PC-9 (cell line): ENCODE measurements at regions of chr12 and their contacts with region 1.

Region 1: DNA sequence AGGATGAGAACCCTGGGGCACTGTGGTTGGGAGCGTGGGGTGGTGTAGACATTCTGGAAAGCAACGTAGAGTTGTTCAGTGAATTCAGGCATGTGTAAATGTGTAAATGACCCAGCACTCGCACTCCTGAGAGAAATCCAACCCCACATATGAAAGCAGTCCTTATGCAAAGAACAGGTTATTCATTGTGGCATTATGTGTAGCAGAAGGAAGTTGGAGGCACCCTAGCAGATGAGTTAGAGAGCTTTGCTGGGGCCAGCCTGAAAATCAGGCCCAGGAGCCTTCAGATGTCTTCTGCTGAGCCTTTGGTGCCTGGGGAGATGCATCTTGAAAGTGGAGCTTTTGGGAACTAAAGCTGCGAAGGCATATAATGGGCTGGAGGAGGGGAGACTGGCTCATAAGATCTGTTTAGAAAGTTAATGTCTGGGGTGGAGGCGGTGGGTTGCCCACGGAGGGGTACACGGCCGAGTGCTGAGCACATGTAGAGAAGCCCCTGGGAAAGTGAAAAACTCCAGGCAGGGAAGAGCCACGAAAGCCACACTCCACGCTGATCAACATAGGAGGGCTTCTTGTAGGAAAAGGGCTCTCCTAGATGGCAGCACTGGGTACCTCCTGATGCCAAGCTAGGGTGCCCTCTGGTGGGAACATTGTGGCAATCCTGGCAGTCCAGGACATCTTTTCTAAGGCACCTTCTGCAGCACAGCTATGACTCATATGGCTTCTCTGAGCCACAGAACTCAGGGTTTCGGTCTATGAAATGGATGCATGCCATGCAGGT is 6.0 kb upstream of the KRT83 start:
- DNase-seq: peak; percentile 86 to 94
- H3K4me3 ChIP-seq: no peak overlapping the region
- H3K27ac ChIP-seq: no peak overlapping the region
- H3K4me1 ChIP-seq: peaks cover 12% of the 10 kb centered on the region
- H3K27me3 ChIP-seq: no peaks in the 10 kb centered on the region
- CTCF ChIP-seq: peak; percentile 85

Region 2: GRCh38 chr12:52139552-52140062 is 187.6 kb before region 1 on chr12:
- CTCF ChIA-PET with region 1: interaction called, 3 read pairs
- POLR2A ChIA-PET with region 1: no interaction called
- intact Hi-C with region 1: loop called (anchors 2 kb)
- DNase-seq: peak; percentile 62 to 78
- H3K4me3 ChIP-seq: no peak overlapping the region
- H3K27ac ChIP-seq: no peak overlapping the region
- H3K4me1 ChIP-seq: peaks cover 22% of the 10 kb centered on the region
- H3K27me3 ChIP-seq: no peaks in the 10 kb centered on the region
- CTCF ChIP-seq: peak; percentile 94

Region 3: GRCh38 chr12:52156736-52157565 is 170.3 kb before region 1 on chr12:
- CTCF ChIA-PET with region 1: interaction called, 6 read pairs
- POLR2A ChIA-PET with region 1: no interaction called
- intact Hi-C with region 1: loop called (anchors 1 kb)
- DNase-seq: peak; percentile 54 to 82
- H3K4me3 ChIP-seq: no peak overlapping the region
- H3K27ac ChIP-seq: no peak overlapping the region
- H3K4me1 ChIP-seq: peaks cover 58% of the 10 kb centered on the region
- H3K27me3 ChIP-seq: no peaks in the 10 kb centered on the region
- CTCF ChIP-seq: peak; percentile 99

Region 4: DNA sequence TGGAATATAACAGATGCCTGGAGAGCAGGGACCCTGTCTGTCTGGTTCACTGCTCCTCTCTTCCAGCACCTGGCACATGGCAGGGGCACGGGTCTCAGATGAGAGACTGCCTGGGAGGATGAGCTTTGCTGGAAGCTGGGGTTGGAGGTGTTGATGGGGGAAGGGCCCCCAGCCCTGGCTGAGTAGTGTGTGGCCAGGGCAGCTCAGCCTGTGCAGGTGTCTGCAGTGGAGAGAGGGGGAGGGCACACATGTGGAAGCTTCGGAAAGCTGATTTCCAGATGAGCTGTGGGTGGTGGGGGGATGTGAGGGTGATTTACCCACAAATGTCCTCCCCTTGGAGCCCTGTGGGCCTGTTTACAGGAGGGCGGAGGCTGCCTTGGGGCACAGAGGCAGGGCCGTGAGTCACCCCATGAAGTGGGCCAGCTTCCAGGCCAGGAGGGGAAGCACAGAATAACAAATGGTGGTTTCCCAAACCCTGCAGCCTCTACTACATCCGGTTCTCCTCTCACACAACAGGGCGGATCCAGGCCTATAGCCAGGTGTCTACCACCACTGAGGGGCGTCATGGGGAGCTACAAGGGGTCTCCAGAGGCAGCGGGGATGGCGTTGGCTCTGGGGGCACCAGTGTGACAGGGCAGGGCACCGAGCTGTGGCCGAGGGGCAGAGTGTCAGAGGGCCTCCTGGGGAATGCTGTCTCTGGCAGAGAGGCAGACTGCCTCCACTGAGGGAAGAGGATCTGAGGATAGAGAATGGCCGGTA is 83.2 kb before region 1 on chr12:
- CTCF ChIA-PET with region 1: interaction called, 5 read pairs
- POLR2A ChIA-PET with region 1: interaction called, 7 read pairs
- intact Hi-C with region 1: loop called (anchors 2 kb)
- DNase-seq: peak; percentile 89 to 95
- H3K4me3 ChIP-seq: 0 out of 2 replicates have a peak overlapping the region, but pooled peaks have one; percentile 7
- H3K27ac ChIP-seq: peak overlapping the region; percentile 90
- H3K4me1 ChIP-seq: peaks cover 99% of the 10 kb centered on the region
- H3K27me3 ChIP-seq: no peaks in the 10 kb centered on the region
- CTCF ChIP-seq: no peak; the same call in 1 of the 2 replicates

Region 5: DNA sequence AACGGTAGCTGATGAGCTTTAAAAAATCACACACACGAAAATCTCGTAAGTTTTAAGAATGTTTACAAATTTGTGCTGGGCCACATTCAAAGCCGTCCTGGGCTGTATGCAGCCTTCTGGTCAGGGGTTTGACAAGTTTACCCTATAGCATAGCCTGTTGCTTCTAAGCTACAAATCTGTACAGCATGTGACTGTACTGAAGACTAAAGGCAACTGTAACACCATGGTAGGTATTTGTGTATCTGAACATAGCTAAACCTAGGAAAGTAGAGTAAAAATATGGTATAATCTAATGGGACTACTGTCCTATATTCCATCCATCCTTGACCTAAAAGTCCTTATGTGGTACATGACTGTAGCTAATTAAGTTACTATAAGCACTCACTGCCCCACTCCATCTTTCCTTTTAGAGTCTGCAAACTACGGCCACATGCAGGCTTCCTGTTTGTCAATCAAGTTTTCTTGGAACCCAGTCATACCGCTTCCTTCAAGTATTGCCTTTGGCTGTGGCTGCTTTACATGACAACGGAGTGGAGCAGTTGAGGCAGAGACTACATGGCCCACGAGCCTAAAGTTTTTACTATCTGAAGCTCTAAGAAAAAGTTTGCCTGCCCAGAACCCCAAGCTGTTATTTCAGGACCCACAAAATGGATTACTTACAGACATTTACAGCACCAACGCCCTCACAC is 75.7 kb before region 1 on chr12:
- CTCF ChIA-PET with region 1: interaction called, 4 read pairs
- POLR2A ChIA-PET with region 1: no interaction called
- intact Hi-C with region 1: loop called (anchors 1 kb)
- DNase-seq: no peak
- H3K4me3 ChIP-seq: no peak overlapping the region
- H3K27ac ChIP-seq: peak overlapping the region; percentile 36
- H3K4me1 ChIP-seq: peaks cover 31% of the 10 kb centered on the region
- H3K27me3 ChIP-seq: no peaks in the 10 kb centered on the region
- CTCF ChIP-seq: no peak